ENCODE measurements at regions of chr6 and their contacts with region 1.

Region 1: GRCh38 chr6:32971581-32972352 is 3.4 kb downstream of the BRD2 start:
- DNase-seq: peak; percentile 99
- H3K4me3 ChIP-seq: peak overlapping the region; percentile 84 to 91
- H3K27ac ChIP-seq: peak overlapping the region; percentile 99 to 100
- H3K4me1 ChIP-seq: peaks cover 10% of the 10 kb centered on the region
- H3K27me3 ChIP-seq: no peaks in the 10 kb centered on the region
- CTCF ChIP-seq: peak in 2 of 4 experiments; percentile 27 to 45
- POLR2A ChIP-seq: peak; percentile 96

Region 2: DNA sequence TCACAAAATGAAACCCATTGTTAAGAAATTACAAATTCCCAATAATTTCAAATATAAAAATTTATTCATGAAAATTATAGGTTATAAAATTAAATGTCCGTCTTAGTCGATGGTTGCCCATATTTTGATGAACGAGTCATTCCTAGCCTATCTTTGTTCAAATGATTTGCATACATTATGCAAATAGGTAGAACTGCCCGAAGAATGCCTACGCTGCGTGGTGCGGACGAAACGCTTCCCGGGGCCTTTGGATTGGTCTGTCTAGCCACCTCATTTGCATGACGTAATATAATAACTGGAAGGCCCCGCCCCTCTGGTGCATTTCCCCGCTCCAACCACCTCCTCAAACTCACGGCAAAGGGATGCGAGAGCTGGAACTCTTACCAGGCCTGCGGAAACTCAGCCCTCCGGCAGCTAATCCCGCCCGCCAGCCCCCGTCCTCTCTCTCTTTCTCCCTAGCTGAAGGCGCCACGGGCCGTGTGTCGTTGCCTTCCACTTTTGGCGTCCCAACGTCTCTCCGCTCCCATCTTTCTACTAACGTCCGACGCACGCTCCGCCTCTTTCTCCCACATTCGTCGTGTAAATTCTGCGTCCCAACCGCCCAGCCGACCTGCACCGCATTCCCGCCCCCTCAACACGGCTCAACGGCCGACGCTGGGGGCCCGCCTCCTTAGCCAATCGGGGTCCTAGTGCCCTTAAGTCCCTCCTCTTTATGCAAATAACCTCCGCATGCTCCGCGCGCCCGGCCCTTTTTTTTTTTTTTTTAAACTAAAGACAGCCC is 1351.8 kb before region 1 on chr6:
- intact Hi-C with region 1: loop called (anchors 5 kb)
- DNase-seq: peak; percentile 97
- H3K4me3 ChIP-seq: peak overlapping the region; percentile 63 to 84
- H3K27ac ChIP-seq: peak overlapping the region; percentile 92 to 96
- H3K4me1 ChIP-seq: no peaks in the 10 kb centered on the region
- H3K27me3 ChIP-seq: no peaks in the 10 kb centered on the region
- CTCF ChIP-seq: peak in 2 of 4 experiments; percentile 29 to 44
- POLR2A ChIP-seq: peak; percentile 97

Region 3: GRCh38 chr6:32195652-32195901 is 776.2 kb before region 1 on chr6:
- intact Hi-C with region 1: loop called (anchors 5 kb)
- DNase-seq: peak; percentile 100
- H3K4me3 ChIP-seq: peak overlapping the region; percentile 57 to 63
- H3K27ac ChIP-seq: peak overlapping the region; percentile 99
- H3K4me1 ChIP-seq: no peaks in the 10 kb centered on the region
- H3K27me3 ChIP-seq: no peaks in the 10 kb centered on the region
- CTCF ChIP-seq: peak; percentile 44 to 95 (median 70)
- POLR2A ChIP-seq: no peak

Region 4: DNA sequence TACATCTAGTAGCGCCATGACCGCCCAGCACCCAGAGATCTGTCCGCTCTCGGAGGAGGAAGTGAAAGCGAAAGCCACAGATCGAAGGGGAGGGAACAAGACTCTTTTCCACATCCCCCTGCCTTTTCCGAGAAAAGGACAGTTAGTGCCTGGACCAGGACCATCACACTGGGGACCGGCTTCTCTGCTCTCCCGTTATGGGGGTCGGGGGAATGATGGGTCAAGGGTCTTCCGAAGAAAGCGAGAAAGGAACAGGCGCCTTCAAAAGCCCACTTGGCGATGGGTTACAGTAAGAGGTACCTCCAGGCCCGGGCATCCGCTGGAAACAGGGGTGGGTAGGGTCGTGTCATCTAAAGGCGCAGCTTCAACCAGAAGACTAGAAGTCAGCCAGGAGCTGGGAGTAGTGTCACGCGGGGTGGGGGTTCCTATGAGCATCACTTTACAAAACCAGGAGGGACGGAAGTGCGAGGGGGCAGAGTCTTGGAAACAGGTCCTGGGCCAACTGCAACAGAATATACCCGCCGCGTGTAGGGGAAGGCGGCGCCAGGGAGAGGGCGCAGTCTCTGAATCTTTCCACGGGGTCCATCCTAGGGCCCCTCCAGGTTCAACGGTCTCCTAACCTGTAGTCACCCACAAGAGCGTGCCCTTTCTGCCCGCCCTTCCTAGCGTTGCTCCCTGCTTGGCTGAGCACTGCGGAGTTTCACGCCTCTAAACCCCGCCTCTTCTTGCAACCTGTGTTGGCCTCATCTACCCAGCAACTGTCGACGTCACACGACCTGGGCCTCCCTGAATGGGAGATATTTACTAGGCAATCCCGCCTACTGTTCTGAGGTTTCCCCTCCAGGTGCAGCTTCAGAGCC is 127.6 kb before region 1 on chr6 and contains the start of gene PSMB8:
- intact Hi-C with region 1: loop called (anchors 5 kb)
- DNase-seq: peak; percentile 98
- H3K4me3 ChIP-seq: peak within 1 kb of the TSS; percentile 72 to 75
- H3K27ac ChIP-seq: peak within 1 kb of the TSS; percentile 91 to 95
- H3K4me1 ChIP-seq: peaks cover 2% of the 10 kb centered on the region
- H3K27me3 ChIP-seq: no peaks in the 10 kb centered on the region
- CTCF ChIP-seq: peak in 2 of 4 experiments; percentile 35 to 43
- POLR2A ChIP-seq: peak; percentile 90
- total RNA-seq, gene PSMB8: 30.7 to 47.3 TPM

Region 5: GRCh38 chr6:32933636-32934085 is 38.1 kb before region 1 on chr6:
- intact Hi-C with region 1: no loop called
- DNase-seq: peak; percentile 74
- H3K4me3 ChIP-seq: no peak overlapping the region
- H3K27ac ChIP-seq: no peak overlapping the region
- H3K4me1 ChIP-seq: no peaks in the 10 kb centered on the region
- H3K27me3 ChIP-seq: no peaks in the 10 kb centered on the region
- CTCF ChIP-seq: peak; percentile 67 to 80 (median 72)
- POLR2A ChIP-seq: no peak

Region 6: GRCh38 chr6:33049323-33050013 is 77.7 kb after region 1 on chr6:
- intact Hi-C with region 1: no loop called
- DNase-seq: no peak
- H3K4me3 ChIP-seq: no peak overlapping the region
- H3K27ac ChIP-seq: no peak overlapping the region
- H3K4me1 ChIP-seq: no peaks in the 10 kb centered on the region
- H3K27me3 ChIP-seq: no peaks in the 10 kb centered on the region
- CTCF ChIP-seq: no peak
- POLR2A ChIP-seq: no peak

Region 7: DNA sequence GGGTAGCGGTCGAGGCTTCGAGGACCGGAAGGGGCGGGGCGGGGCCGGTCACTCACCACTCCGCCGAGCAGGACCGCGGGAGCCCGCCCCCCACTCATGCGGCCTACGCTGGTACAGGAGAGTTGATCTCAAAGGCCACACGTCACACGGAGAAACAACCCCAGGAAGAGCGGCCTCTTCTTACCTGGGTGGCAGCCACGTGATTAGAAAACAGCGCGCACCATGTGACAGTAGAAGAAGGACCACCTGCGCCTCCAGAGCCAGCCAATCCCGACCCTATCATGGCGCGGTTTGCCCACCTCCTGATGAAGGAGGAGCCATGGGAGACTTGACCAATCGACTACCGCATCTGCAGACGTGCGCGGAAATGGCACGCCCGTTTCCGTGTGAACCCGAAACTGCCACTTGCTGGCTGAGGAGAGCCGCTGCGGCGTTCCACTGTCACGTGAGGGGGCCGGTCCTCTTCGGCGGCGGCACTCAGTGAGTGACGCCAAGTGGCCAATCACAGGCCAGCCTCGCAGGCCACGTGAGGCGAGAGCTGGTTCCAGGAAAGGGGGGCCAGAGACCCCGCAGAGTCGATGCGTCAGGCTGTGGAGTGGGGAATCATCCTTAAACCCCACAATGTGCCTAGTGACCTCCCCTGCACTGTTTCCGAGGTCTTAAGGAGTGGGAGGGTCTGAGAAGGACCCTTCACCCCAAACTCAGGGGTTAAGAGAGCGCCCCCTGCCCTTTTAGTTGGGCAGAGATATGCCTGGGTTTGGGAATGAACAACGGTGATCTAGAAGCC is 446.3 kb after region 1 on chr6 and contains the start of gene CUTA:
- intact Hi-C with region 1: loop called (anchors 10 kb)
- DNase-seq: peak; percentile 100
- H3K4me3 ChIP-seq: peak within 1 kb of the TSS; percentile 42 to 56
- H3K27ac ChIP-seq: peak within 1 kb of the TSS; percentile 93 to 95
- H3K4me1 ChIP-seq: peaks cover 6% of the 10 kb centered on the region
- H3K27me3 ChIP-seq: no peaks in the 10 kb centered on the region
- CTCF ChIP-seq: peak in 3 of 4 experiments; percentile 35 to 71 (median 59)
- POLR2A ChIP-seq: peak; percentile 72
- total RNA-seq, gene CUTA: 189 to 260 TPM

Region 8: GRCh38 chr6:34447910-34448309 is 1476.1 kb after region 1 on chr6:
- intact Hi-C with region 1: no loop called
- DNase-seq: no peak
- H3K4me3 ChIP-seq: no peak overlapping the region
- H3K27ac ChIP-seq: no peak overlapping the region
- H3K4me1 ChIP-seq: no peaks in the 10 kb centered on the region
- H3K27me3 ChIP-seq: no peaks in the 10 kb centered on the region
- CTCF ChIP-seq: no peak
- POLR2A ChIP-seq: no peak

Measured in prostate gland (tissue), 2 donors.